Mammary epithelial cell (primary cell): ENCODE measurements at regions of chr6 and their contacts with region 1.

Region 1: GRCh38 chr6:126792340-126793085 is 326.0 kb upstream of the RSPO3 start:
- DNase-seq: no peak
- H3K4me3 ChIP-seq: no peak overlapping the region
- H3K27ac ChIP-seq: no peak overlapping the region
- H3K4me1 ChIP-seq: no peaks in the 10 kb centered on the region
- H3K27me3 ChIP-seq: peaks cover under 1% of the 10 kb centered on the region
- CTCF ChIP-seq: no peak

Region 2: GRCh38 chr6:126361832-126362412 is 430.6 kb before region 1 on chr6:
- CTCF ChIA-PET with region 1: no interaction called
- dilution Hi-C with region 1: no loop called
- in situ Hi-C with region 1: no loop called
- intact Hi-C with region 1: loop called (anchors 5 kb)
- DNase-seq: no peak
- H3K4me3 ChIP-seq: no peak overlapping the region
- H3K27ac ChIP-seq: no peak overlapping the region
- H3K4me1 ChIP-seq: no peaks in the 10 kb centered on the region
- H3K27me3 ChIP-seq: no peaks in the 10 kb centered on the region
- CTCF ChIP-seq: no peak

Region 3: DNA sequence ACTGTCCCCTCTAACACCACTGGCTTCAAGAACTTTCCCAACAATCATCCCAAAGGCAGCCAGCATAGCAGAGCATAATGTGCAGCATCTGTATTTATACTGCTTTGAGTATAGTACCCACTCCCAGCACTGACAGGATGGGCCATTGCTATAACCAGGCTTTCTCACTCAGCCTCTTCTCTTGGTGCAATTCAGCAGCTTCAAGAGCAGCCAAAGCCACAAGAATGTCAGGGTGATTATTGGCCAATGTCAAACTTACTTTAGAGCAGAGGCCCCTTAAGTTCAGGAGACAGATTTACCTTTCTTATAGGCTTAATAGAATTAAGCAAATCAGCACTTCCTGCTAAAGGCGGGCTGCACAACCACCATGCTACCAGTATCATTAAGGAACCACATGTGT is 93.6 kb after region 1 on chr6:
- CTCF ChIA-PET with region 1: no interaction called
- dilution Hi-C with region 1: no loop called
- in situ Hi-C with region 1: no loop called
- intact Hi-C with region 1: no loop called
- DNase-seq: no peak
- H3K4me3 ChIP-seq: no peak overlapping the region
- H3K27ac ChIP-seq: no peak overlapping the region
- H3K4me1 ChIP-seq: no peaks in the 10 kb centered on the region
- H3K27me3 ChIP-seq: peaks cover 5% of the 10 kb centered on the region
- CTCF ChIP-seq: no peak